ENCODE measurements at regions of chr7 and their contacts with region 1.

Region 1: DNA sequence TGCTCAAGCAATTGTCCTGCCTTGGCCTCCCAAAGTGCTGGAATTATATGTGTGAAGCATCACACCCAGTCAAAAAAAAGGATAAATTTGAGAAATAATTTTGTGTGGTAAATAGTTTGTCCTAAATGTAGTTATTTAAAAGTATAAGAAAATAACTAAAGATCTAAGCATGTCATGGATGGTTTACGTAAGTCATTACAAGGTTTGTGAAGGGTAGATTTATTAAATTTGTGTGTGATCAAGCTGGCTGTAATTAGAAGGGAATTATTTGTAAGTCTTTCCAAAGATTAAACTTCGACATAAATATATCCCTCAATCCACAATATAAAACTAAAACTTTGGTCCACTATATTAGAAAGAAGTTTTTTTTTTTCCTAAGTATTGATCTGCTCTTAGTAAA is 28.6 kb downstream of the ORC5 start:
- DNase-seq: no peak
- ATAC-seq: no peak
- H3K4me3 ChIP-seq: no peak overlapping the region
- H3K27ac ChIP-seq: no peak overlapping the region
- H3K4me1 ChIP-seq: no peaks in the 10 kb centered on the region
- H3K27me3 ChIP-seq: no peaks in the 10 kb centered on the region
- CTCF ChIP-seq: no peak
- POLR2A ChIP-seq: no peak

Region 2: GRCh38 chr7:104231054-104232046 is 52.2 kb after region 1 on chr7:
- intact Hi-C with region 1: loop called in 1 of 10 experiments (anchors 10 kb)
- DNase-seq: peak in 3 of 5 donors; percentile 20 to 48 (median 32)
- ATAC-seq: peak; percentile 26 to 86 (median 68)
- H3K4me3 ChIP-seq: no peak overlapping the region
- H3K27ac ChIP-seq: no peak overlapping the region
- H3K4me1 ChIP-seq: peaks cover 0 to 7% (median 0%) of the 10 kb centered on the region in 12 donors
- H3K27me3 ChIP-seq: peaks cover 0 to 14% (median 4%) of the 10 kb centered on the region in 9 donors
- CTCF ChIP-seq: peak; percentile 65 to 85 (median 74)
- POLR2A ChIP-seq: no peak

Measured in heart left ventricle (tissue), 16 donors.